Activated B cell treated with CpG ODN at 0.5 μM for 24 hours (primary cell): ENCODE measurements at regions of chr16 and their contacts with region 1.

Region 1: GRCh38 chr16:29645694-29646187 is 17.3 kb upstream of the SPN start:
- DNase-seq: no peak
- ATAC-seq: peak; percentile 42
- H3K4me3 Mint-ChIP-seq: peak overlapping the region; percentile 69
- H3K27ac Mint-ChIP-seq: peak overlapping the region; percentile 92
- H3K4me1 Mint-ChIP-seq: peaks cover 42% of the 10 kb centered on the region
- H3K27me3 Mint-ChIP-seq: no peaks in the 10 kb centered on the region
- CTCF ChIP-seq: no peak

Region 2: DNA sequence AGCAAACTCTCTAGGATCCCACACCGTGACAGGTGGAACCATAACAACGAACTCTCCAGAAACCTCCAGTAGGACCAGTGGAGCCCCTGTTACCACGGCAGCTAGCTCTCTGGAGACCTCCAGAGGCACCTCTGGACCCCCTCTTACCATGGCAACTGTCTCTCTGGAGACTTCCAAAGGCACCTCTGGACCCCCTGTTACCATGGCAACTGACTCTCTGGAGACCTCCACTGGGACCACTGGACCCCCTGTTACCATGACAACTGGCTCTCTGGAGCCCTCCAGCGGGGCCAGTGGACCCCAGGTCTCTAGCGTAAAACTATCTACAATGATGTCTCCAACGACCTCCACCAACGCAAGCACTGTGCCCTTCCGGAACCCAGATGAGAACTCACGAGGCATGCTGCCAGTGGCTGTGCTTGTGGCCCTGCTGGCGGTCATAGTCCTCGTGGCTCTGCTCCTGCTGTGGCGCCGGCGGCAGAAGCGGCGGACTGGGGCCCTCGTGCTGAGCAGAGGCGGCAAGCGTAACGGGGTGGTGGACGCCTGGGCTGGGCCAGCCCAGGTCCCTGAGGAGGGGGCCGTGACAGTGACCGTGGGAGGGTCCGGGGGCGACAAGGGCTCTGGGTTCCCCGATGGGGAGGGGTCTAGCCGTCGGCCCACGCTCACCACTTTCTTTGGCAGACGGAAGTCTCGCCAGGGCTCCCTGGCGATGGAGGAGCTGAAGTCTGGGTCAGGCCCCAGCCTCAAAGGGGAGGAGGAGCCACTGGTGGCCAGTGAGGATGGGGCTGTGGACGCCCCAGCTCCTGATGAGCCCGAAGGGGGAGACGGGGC is 18.6 kb after region 1 on chr16:
- CTCF ChIA-PET with region 1: interaction called, 4 read pairs
- POLR2A ChIA-PET with region 1: interaction called, 12 read pairs
- intact Hi-C with region 1: loop called (anchors 1 kb)
- DNase-seq: no peak
- ATAC-seq: peak; percentile 18
- H3K4me3 Mint-ChIP-seq: peak overlapping the region; percentile 74
- H3K27ac Mint-ChIP-seq: peak overlapping the region; percentile 68
- H3K4me1 Mint-ChIP-seq: peaks cover 63% of the 10 kb centered on the region
- H3K27me3 Mint-ChIP-seq: no peaks in the 10 kb centered on the region
- CTCF ChIP-seq: no peak

Region 3: DNA sequence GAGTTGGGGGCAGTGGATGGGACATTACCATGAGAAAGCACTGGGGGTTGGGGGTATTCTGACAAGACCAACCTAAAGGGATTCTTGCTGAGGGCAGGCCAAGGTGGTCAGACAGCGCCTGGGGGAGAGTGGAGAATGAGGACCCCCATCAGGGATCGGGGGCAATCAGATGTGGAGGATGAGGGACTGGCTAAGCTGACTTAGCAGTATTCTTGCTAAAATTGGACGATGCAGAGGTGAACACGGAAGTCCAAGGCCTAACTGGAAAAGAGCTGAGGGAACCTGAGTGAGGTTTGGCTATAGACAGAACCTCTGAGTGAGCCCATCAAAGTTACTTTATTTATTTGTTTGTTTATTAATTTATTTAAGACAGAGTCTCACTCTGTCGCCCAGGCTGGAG is 42.4 kb after region 1 on chr16:
- CTCF ChIA-PET with region 1: interaction called, 5 read pairs
- POLR2A ChIA-PET with region 1: interaction called, 15 read pairs
- intact Hi-C with region 1: no loop called
- DNase-seq: no peak
- ATAC-seq: no peak
- H3K4me3 Mint-ChIP-seq: no peak overlapping the region
- H3K27ac Mint-ChIP-seq: no peak overlapping the region
- H3K4me1 Mint-ChIP-seq: peaks cover 17% of the 10 kb centered on the region
- H3K27me3 Mint-ChIP-seq: no peaks in the 10 kb centered on the region
- CTCF ChIP-seq: no peak

Region 4: GRCh38 chr16:29710227-29711219 is 64.8 kb after region 1 on chr16:
- CTCF ChIA-PET with region 1: interaction called, 3 read pairs
- POLR2A ChIA-PET with region 1: no interaction called
- intact Hi-C with region 1: loop called (anchors 1 kb)
- DNase-seq: no peak
- ATAC-seq: peak; percentile 97
- H3K4me3 Mint-ChIP-seq: no peak overlapping the region
- H3K27ac Mint-ChIP-seq: no peak overlapping the region
- H3K4me1 Mint-ChIP-seq: peaks cover 26% of the 10 kb centered on the region
- H3K27me3 Mint-ChIP-seq: no peaks in the 10 kb centered on the region
- CTCF ChIP-seq: peak; percentile 30

Region 5: GRCh38 chr16:29745853-29746345 is 100.2 kb after region 1 on chr16 and contains the start of gene C16orf54:
- CTCF ChIA-PET with region 1: no interaction called
- POLR2A ChIA-PET with region 1: interaction called, 11 read pairs
- intact Hi-C with region 1: no loop called
- DNase-seq: peak; percentile 80
- ATAC-seq: peak; percentile 86
- H3K4me3 Mint-ChIP-seq: peak within 1 kb of the TSS; percentile 94
- H3K27ac Mint-ChIP-seq: peak within 1 kb of the TSS; percentile 96
- H3K4me1 Mint-ChIP-seq: peaks cover 65% of the 10 kb centered on the region
- H3K27me3 Mint-ChIP-seq: no peaks in the 10 kb centered on the region
- CTCF ChIP-seq: no peak
- total RNA-seq, gene C16orf54: 20.4 and 22.5 TPM in 2 replicates